Cardiac septum (tissue), 1 donor: ENCODE measurements at regions of chr6 and their contacts with region 1.

Region 1: GRCh38 chr6:37473397-37474095 is 26.1 kb downstream of the CCDC167 start:
- DNase-seq: peak; percentile 80

Region 2: DNA sequence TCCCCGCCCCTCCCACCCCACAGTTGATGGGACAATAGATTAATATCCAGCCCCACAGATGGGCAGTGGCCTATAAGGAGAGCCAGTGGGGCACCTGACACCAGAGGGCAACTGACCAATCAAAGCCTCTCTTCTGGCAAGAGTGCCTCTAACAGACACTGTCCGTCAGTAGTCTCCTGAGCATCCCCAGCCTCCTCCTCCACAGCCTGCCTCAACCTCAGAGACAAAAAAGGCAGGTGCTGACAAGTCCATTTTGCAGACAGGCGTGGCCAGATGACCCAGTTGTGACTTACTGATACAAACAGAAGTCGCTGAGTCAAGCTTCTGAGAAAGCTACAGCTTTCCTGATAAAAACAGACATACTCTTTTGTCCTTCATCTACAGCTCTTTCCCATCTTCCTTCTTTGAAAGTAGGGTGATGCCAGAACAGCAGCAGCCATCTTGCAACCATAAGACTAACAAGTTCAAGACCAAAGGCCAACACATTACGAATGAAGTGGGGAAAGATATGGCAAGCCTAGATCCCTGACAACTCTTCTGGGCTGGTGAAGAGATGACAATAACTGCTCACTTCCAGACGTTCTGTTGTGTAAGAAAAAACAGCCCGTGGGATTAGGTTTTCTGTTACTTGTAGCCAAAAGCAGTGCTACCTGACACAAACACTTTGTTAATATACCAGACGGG is 611.2 kb before region 1 on chr6:
- intact Hi-C with region 1: no loop called
- DNase-seq: no peak

Region 3: DNA sequence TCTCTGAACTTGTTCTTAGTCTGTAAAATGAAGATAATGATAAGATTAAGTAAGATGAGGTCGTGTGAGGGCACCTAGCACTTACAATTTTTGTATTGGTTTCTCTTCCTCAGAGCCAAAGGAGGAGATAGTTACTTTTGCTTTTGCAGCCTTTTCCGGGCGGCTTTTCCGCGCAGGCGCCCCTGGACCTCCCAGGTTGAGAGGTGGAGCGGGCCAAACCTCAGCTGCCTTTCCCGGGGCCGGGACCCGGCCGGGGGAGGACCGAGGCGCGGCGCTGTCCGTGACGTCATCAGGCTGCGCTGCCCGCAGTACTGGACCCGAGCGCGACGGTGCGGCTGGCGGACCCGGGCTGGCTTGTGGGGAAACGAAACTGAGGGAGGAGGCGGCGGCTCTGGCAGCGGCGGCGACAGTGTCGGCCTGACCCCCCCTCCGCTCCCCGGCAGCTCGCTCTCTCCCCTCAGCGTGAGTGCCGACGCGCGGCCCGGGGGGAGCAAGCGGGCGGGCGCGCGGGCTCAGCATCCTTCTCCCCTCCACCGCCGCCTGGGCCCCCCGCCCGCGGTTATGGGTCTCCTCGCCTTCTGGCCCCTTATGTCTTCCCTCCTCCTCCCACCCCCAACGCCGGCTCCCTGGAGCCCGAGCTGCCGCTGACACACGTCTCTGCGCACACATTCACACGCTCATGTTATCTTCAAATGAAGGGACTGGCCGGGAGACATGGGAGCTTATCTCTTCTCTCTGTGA is 40.5 kb before region 1 on chr6 and contains the start of gene CMTR1:
- intact Hi-C with region 1: loop called (anchors 5 kb)
- DNase-seq: peak; percentile 98
- total RNA-seq, gene CMTR1: 30.4 TPM